ENCODE measurements at regions of chrX and their contacts with region 1.

Region 1: GRCh38 chrX:47193475-47194193 is at the start of gene UBA1:
- DNase-seq: peak; percentile 97
- ATAC-seq: peak; percentile 89 to 96
- total RNA-seq, gene UBA1: 101 to 132 TPM

Region 2: DNA sequence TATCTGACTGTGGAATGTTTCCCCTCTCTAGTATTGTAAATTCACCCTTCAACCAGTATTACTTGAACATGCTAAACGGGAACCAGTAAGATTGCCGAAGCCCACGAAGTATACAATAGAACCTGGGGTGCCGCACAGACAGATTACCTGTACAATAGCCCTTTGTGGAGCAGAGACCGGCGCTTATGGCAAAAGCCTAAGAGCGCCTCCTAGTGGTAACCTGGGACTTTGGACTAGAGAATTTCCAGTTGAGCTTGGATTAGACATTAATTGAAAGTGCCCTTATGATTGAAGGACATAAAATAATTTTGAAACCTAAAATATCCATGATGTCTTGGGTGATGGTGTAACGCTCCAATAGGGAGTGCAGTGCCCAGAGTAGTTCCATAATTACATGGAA is 190.9 kb after region 1 on chrX:
- intact Hi-C with region 1: loop called (anchors 2 to 10 kb)
- DNase-seq: peak; percentile 52
- ATAC-seq: peak; percentile 35 to 50

Region 3: GRCh38 chrX:47523297-47523696 is 329.7 kb after region 1 on chrX:
- intact Hi-C with region 1: loop called (anchors 5 to 10 kb)
- DNase-seq: peak; percentile 85
- ATAC-seq: peak; percentile 99 to 100

Region 4: DNA sequence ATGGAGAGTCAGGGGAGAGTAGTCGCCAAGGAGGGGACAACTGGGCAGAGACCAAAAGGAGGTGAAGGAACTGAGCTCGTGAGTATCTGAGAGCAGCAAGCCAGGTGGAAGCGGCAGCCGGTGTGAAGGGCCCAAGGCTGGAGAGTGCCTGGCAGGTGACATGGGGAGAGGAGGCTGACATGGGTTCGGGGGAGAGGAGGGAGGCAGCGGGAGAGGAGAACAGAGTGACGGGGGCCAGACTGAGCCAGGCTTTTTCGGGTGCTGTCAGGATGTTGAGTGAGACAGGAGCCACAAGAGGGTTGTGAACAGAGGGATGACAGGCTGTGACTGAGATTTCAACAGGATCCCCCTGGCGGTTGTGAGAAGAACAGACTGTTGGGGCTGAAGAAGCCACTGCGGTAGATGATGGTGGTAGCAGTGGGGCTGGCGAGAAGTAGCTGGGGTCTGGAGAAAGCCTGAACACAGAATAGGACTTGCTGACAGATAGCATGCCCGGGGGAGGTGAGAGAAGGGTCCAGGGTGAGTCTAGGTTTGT is 451.0 kb after region 1 on chrX:
- intact Hi-C with region 1: loop called in 1 of 2 experiments (anchors 10 kb)
- DNase-seq: no peak
- ATAC-seq: peak; percentile 49 to 68

Measured in left cardiac atrium (tissue), 4 donors.